RWPE1 (cell line): ENCODE measurements at regions of chr19 and their contacts with region 1.

Region 1: GRCh38 chr19:16441661-16442162 is 30.1 kb downstream of the EPS15L1 start:
- DNase-seq: no peak
- H3K27ac ChIP-seq: no peak overlapping the region
- CTCF ChIP-seq: no peak; the same call in 1 of the 2 replicates

Region 2: DNA sequence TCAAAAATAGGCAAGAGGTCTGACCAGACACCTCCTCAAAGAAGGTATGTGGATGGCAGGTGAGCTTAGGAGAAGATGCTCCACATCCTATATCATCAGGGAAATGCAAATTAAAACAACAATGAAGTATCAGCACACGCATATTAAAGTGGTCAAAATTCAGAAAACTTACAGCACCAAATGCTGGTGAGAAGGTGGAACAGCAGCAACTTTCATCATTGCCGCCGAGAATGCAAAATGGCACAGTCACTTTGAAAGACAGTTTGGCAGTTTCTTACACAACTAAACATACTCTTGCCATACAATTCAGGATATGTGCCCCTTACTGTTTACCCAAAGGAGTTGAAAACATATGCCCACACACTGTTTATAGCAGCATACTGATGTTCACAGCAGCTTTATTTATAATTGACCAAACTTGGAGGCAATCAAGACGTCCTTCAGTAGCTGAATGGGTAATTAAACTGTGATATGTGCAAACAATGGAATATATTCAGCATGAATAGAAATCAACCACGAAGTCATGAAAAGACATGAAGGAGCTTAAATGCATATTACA is 470.4 kb before region 1 on chr19:
- CTCF ChIA-PET with region 1: no interaction called
- POLR2A ChIA-PET with region 1: no interaction called
- DNase-seq: no peak
- H3K27ac ChIP-seq: no peak overlapping the region
- CTCF ChIP-seq: no peak

Region 3: GRCh38 chr19:16429066-16429758 is 12.5 kb before region 1 on chr19:
- CTCF ChIA-PET with region 1: interaction called, 10 read pairs
- POLR2A ChIA-PET with region 1: no interaction called
- DNase-seq: peak; percentile 85
- H3K27ac ChIP-seq: peak overlapping the region; percentile 70
- CTCF ChIP-seq: no peak

Region 4: GRCh38 chr19:16778796-16779411 is 337.2 kb after region 1 on chr19:
- CTCF ChIA-PET with region 1: no interaction called
- POLR2A ChIA-PET with region 1: no interaction called
- DNase-seq: peak; percentile 77
- H3K27ac ChIP-seq: no peak overlapping the region
- CTCF ChIP-seq: peak; percentile 59